Esophagus squamous epithelium (tissue), 5 donors: ENCODE measurements at regions of chr18 and their contacts with region 1.

Region 1: DNA sequence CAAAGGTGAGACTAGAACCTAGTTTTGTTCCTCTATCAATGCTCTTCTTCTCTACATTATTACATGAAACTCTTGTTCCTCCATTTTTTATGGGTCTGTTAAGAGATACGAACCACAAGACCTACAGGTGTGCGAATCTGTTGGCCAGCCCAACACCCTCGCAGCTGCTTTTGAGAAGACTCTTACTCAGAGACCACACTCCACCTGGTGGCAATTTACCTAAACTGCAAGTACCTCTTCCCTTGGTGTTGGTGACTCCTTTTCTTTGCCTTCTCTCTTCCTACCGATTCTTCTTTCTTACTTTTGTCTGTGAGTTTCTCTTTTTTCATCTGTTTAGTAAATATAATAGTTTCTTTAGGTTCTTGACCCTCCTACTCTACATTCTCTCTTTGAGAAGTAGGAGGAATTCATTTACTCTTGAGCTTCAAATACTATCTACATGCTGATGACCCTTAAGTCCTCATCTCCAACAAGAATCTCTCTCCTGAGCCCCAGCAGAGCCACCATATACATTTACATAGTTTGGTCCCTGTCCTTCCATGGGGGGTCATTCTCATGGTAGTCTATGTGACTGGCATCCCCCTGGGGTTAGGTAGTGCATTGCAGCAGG is 81.8 kb upstream of the GAREM1 start:
- DNase-seq: no peak
- H3K4me3 ChIP-seq: no peak overlapping the region
- H3K27ac ChIP-seq: no peak overlapping the region
- H3K4me1 ChIP-seq: peaks cover 0 to 6% (median 0%) of the 10 kb centered on the region in 3 donors
- H3K27me3 ChIP-seq: peaks cover 0 to 5% (median 0%) of the 10 kb centered on the region in 4 donors
- CTCF ChIP-seq: peak; percentile 63 to 84 (median 80)
- POLR2A ChIP-seq: no peak

Region 2: GRCh38 chr18:32158108-32158624 is 394.4 kb before region 1 on chr18:
- intact Hi-C with region 1: loop called (anchors 5 kb)
- DNase-seq: no peak
- H3K4me3 ChIP-seq: peak overlapping the region in 2 of 4 donors; percentile 27 to 51
- H3K27ac ChIP-seq: no peak overlapping the region
- H3K4me1 ChIP-seq: peaks cover 4 to 7% (median 5%) of the 10 kb centered on the region in 3 donors
- H3K27me3 ChIP-seq: peaks cover 0 to 6% (median 0%) of the 10 kb centered on the region in 4 donors
- CTCF ChIP-seq: peak; percentile 76 to 86 (median 84)
- POLR2A ChIP-seq: no peak

Region 3: GRCh38 chr18:32276906-32277305 is 275.6 kb before region 1 on chr18:
- intact Hi-C with region 1: loop called (anchors 5 kb)
- DNase-seq: no peak
- H3K4me3 ChIP-seq: no peak overlapping the region
- H3K27ac ChIP-seq: no peak overlapping the region
- H3K4me1 ChIP-seq: no peaks in the 10 kb centered on the region
- H3K27me3 ChIP-seq: no peaks in the 10 kb centered on the region
- CTCF ChIP-seq: no peak
- POLR2A ChIP-seq: no peak